B cell (primary cell): ENCODE measurements at regions of chr19 and their contacts with region 1.

Region 1: GRCh38 chr19:913080-913748 is at the start of gene R3HDM4:
- DNase-seq: peak; percentile 87
- ATAC-seq: peak; percentile 45
- H3K4me3 ChIP-seq: peak within 1 kb of the TSS; percentile 72 to 91 (median 86)
- H3K4me3 Mint-ChIP-seq: peak within 1 kb of the TSS; percentile 85
- H3K27ac ChIP-seq: peak within 1 kb of the TSS; percentile 96 to 98
- H3K27ac Mint-ChIP-seq: peak within 1 kb of the TSS; percentile 93
- H3K4me1 ChIP-seq: peaks cover 47 to 62% of the 10 kb centered on the region in 2 donors
- H3K4me1 Mint-ChIP-seq: peaks cover 35% of the 10 kb centered on the region
- H3K27me3 ChIP-seq: peaks cover 0 to 27% (median 4%) of the 10 kb centered on the region in 4 experiments
- H3K27me3 Mint-ChIP-seq: peaks cover 3% of the 10 kb centered on the region
- CTCF ChIP-seq: no peak
- total RNA-seq, gene R3HDM4: 165 and 176 TPM in 2 replicates

Region 2: DNA sequence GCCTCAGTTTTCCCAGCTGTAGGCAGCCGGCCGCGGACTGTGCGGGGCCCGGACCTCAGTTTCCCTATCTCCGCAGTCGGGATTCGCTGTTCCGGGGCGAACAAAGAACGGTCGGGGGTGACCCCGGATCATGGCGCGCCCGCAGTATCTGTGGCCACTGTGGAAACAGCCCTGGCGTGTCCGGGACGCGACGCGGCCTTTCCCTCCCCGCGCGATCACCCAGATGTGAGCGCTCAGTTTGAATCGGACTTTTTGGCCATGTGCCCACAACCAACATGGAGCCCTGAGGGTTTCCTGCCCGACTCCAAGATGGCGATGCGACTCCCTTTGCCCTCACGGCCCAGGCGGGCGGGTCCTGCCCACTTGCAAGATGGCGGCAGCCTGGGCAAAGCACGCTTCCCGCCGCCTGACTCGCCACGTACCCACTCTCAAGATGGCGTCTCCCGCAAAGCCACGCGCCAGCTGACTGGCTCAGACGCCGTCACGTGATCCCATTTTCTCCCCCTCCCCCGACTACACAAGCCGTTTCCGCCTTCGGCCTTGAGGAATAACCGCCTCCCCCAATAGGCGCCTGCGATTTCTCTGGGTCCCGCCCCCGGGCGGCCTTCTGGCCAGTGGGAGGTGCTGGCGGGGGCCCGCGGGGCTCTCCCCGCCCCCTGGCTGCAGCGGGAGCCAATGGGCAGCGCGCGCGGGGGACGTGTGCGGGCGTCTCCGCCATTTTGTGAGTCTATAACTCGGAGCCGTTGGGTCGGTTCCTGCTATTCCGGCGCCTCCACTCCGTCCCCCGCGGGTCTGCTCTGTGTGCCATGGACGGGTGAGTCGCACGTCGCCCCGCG is 116.3 kb before region 1 on chr19 and contains the start of gene PTBP1:
- CTCF ChIA-PET with region 1: interaction called, 4 read pairs
- POLR2A ChIA-PET with region 1: no interaction called
- intact Hi-C with region 1: loop called (anchors 2 kb)
- DNase-seq: peak; percentile 100
- ATAC-seq: peak; percentile 85
- H3K4me3 ChIP-seq: peak within 1 kb of the TSS; percentile 61 to 86 (median 78)
- H3K4me3 Mint-ChIP-seq: peak within 1 kb of the TSS; percentile 98
- H3K27ac ChIP-seq: peak within 1 kb of the TSS; percentile 57 to 74
- H3K27ac Mint-ChIP-seq: peak within 1 kb of the TSS; percentile 88
- H3K4me1 ChIP-seq: peaks cover 22 to 48% of the 10 kb centered on the region in 2 donors
- H3K4me1 Mint-ChIP-seq: peaks cover 33% of the 10 kb centered on the region
- H3K27me3 ChIP-seq: no peaks in the 10 kb centered on the region
- H3K27me3 Mint-ChIP-seq: no peaks in the 10 kb centered on the region
- CTCF ChIP-seq: no peak
- total RNA-seq, gene PTBP1: 304 and 309 TPM in 2 replicates

Region 3: DNA sequence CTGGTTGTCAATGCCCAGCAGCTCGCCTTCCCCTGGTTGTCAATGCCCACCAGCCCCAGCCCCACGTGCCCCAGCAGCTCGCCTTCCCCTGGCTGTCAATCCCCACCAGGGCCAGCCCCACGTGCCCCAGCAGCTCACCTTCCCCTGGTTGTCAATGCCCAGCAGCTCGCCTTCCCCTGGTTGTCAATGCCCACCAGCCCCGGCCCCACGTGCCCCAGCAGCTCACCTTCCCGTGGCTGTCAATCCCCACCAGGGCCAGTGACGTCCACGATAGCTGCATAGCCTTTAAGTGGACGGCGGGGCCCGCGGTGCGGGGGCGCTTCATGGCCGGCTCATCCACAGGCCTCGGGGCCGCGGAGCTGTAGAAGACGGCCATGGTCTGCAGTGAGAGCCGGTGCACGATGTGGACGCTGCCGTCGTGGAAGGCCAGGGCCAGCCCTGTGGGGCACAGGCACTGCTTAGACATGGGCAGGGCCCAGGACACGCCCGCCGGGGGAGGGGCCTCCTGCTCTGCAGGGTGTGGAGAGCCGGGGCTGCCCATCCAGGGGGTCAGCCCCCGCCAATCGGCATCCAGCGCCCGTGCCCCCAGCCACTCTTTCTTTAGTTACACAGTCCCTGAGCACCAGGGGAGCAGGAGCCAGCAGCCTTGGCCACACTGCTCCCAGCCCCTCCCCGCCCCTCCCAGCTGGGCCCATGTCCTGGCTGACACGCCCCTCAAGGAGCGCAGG is 33.3 kb before region 1 on chr19:
- CTCF ChIA-PET with region 1: interaction called, 4 read pairs
- POLR2A ChIA-PET with region 1: interaction called, 10 read pairs
- intact Hi-C with region 1: no loop called
- DNase-seq: no peak
- ATAC-seq: no peak
- H3K4me3 ChIP-seq: no peak overlapping the region
- H3K4me3 Mint-ChIP-seq: no peak overlapping the region
- H3K27ac ChIP-seq: no peak overlapping the region
- H3K27ac Mint-ChIP-seq: no peak overlapping the region
- H3K4me1 ChIP-seq: peaks cover 0 to 3% of the 10 kb centered on the region in 2 donors
- H3K4me1 Mint-ChIP-seq: no peaks in the 10 kb centered on the region
- H3K27me3 ChIP-seq: no peaks in the 10 kb centered on the region
- H3K27me3 Mint-ChIP-seq: no peaks in the 10 kb centered on the region
- CTCF ChIP-seq: no peak

Region 4: GRCh38 chr19:892243-893050 is 20.8 kb before region 1 on chr19:
- CTCF ChIA-PET with region 1: interaction called, 35 read pairs
- POLR2A ChIA-PET with region 1: interaction called, 56 read pairs
- intact Hi-C with region 1: loop called (anchors 1 kb)
- DNase-seq: peak; percentile 50
- ATAC-seq: peak; percentile 60
- H3K4me3 ChIP-seq: peak overlapping the region; percentile 18 to 91 (median 76)
- H3K4me3 Mint-ChIP-seq: peak overlapping the region; percentile 95
- H3K27ac ChIP-seq: peak overlapping the region; percentile 68 to 98
- H3K27ac Mint-ChIP-seq: peak overlapping the region; percentile 100
- H3K4me1 ChIP-seq: peaks cover 5 to 37% of the 10 kb centered on the region in 2 donors
- H3K4me1 Mint-ChIP-seq: peaks cover 17% of the 10 kb centered on the region
- H3K27me3 ChIP-seq: no peaks in the 10 kb centered on the region
- H3K27me3 Mint-ChIP-seq: no peaks in the 10 kb centered on the region
- CTCF ChIP-seq: no peak

Region 5: DNA sequence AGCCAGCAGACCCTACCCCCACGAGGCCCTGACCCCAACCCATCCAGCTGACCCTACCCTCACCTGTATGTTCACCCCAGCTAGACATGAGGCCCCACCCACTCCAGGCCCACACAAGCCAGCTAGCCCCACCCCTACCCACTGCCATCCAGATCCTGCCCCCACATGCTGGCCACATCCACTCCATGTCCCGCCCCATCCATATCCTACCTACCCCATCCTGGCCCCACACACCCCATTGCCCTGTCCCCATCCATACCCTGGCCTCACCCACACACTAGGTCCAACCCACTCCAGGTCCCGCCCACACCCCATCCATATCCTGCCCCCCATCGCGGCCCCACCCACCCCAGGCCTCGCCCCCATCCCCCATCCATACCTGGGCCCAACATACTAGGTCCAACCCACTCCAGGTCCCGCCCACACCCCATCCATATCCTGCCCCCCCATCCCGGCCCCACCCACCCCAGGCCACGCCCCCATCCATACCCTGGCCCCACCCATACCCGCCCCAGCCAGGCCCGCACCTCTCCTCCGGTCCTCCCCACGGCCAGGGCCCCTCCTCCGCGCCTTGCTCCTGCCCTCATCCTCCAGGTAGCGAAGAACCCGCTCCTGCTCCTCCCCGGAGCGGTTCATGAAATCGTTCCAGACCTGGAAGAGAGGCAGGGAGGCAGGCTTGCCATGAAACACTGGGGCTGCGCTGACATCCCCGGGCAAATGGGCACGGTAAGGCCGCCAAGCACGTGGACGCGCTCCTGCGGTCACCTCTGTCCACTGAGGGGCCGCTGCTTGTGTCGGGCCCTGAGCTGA is 12.7 kb before region 1 on chr19:
- CTCF ChIA-PET with region 1: interaction called, 5 read pairs
- POLR2A ChIA-PET with region 1: interaction called, 12 read pairs
- intact Hi-C with region 1: no loop called
- DNase-seq: peak; percentile 23
- ATAC-seq: peak; percentile 8
- H3K4me3 ChIP-seq: no peak overlapping the region
- H3K4me3 Mint-ChIP-seq: no peak overlapping the region
- H3K27ac ChIP-seq: peak overlapping the region in 1 of 2 donors; percentile 43
- H3K27ac Mint-ChIP-seq: no peak overlapping the region
- H3K4me1 ChIP-seq: peaks cover under 1 to 14% of the 10 kb centered on the region in 2 donors
- H3K4me1 Mint-ChIP-seq: peaks cover 26% of the 10 kb centered on the region
- H3K27me3 ChIP-seq: no peaks in the 10 kb centered on the region
- H3K27me3 Mint-ChIP-seq: no peaks in the 10 kb centered on the region
- CTCF ChIP-seq: no peak

Region 6: GRCh38 chr19:961866-962620 is 48.8 kb after region 1 on chr19:
- CTCF ChIA-PET with region 1: no interaction called
- POLR2A ChIA-PET with region 1: no interaction called
- intact Hi-C with region 1: no loop called
- DNase-seq: no peak
- ATAC-seq: no peak
- H3K4me3 ChIP-seq: no peak overlapping the region
- H3K4me3 Mint-ChIP-seq: no peak overlapping the region
- H3K27ac ChIP-seq: no peak overlapping the region
- H3K27ac Mint-ChIP-seq: no peak overlapping the region
- H3K4me1 ChIP-seq: no peaks in the 10 kb centered on the region
- H3K4me1 Mint-ChIP-seq: peaks cover 2% of the 10 kb centered on the region
- H3K27me3 ChIP-seq: no peaks in the 10 kb centered on the region
- H3K27me3 Mint-ChIP-seq: no peaks in the 10 kb centered on the region
- CTCF ChIP-seq: no peak

Region 7: DNA sequence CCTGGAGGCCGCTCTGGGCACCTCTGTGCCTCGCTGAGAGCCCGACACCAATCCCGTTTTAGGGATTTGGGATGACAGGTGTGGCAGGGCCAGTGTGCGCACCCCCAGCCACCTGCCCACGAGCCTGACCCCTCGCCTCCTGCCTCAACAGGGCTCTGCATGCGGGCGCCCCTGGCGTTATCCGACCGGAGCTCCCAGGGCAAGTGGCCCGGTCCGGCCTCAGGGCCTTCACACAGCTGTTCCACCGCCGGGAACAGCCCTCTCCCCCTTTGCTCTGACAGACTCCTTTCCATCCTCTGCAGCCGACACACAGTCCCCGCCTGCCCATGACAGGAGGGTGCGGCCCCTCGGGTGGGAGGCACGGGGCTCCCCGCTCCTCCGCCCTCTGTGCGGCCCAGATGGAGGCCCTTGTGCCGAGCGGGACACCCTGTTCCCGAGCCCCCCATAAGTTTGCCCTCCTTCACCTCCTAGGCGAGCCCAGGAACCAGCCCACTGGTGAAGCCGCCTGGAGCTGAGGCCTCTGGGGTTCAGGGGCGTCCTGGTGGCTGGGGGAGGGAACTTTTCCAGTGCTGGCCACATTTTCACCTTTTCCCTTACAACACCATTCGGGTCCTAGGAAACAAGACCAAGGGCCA is 64.0 kb after region 1 on chr19:
- CTCF ChIA-PET with region 1: no interaction called
- POLR2A ChIA-PET with region 1: no interaction called
- intact Hi-C with region 1: no loop called
- DNase-seq: no peak
- ATAC-seq: no peak
- H3K4me3 ChIP-seq: no peak overlapping the region
- H3K4me3 Mint-ChIP-seq: no peak overlapping the region
- H3K27ac ChIP-seq: no peak overlapping the region
- H3K27ac Mint-ChIP-seq: no peak overlapping the region
- H3K4me1 ChIP-seq: no peaks in the 10 kb centered on the region
- H3K4me1 Mint-ChIP-seq: no peaks in the 10 kb centered on the region
- H3K27me3 ChIP-seq: no peaks in the 10 kb centered on the region
- H3K27me3 Mint-ChIP-seq: no peaks in the 10 kb centered on the region
- CTCF ChIP-seq: no peak

Region 8: GRCh38 chr19:1205114-1206062 is 292.2 kb after region 1 on chr19 and contains the start of gene STK11:
- CTCF ChIA-PET with region 1: no interaction called
- POLR2A ChIA-PET with region 1: interaction called, 10 read pairs
- intact Hi-C with region 1: no loop called
- DNase-seq: peak; percentile 99
- ATAC-seq: peak; percentile 92
- H3K4me3 ChIP-seq: peak within 1 kb of the TSS; percentile 51 to 77 (median 63)
- H3K4me3 Mint-ChIP-seq: peak within 1 kb of the TSS; percentile 94
- H3K27ac ChIP-seq: peak within 1 kb of the TSS; percentile 43 to 65
- H3K27ac Mint-ChIP-seq: peak within 1 kb of the TSS; percentile 92
- H3K4me1 ChIP-seq: peaks cover 16 to 32% of the 10 kb centered on the region in 2 donors
- H3K4me1 Mint-ChIP-seq: peaks cover 25% of the 10 kb centered on the region
- H3K27me3 ChIP-seq: no peaks in the 10 kb centered on the region
- H3K27me3 Mint-ChIP-seq: no peaks in the 10 kb centered on the region
- CTCF ChIP-seq: no peak
- total RNA-seq, gene STK11: 89.9 and 91.8 TPM in 2 replicates